K562 (cell line): ENCODE measurements at regions of chr1 and their contacts with region 1.

Region 1: GRCh38 chr1:224406216-224406615 is 28.4 kb downstream of the WDR26 start:
- DNase-seq: no peak
- ATAC-seq: no peak
- H3K4me3 ChIP-seq: no peak overlapping the region
- H3K27ac ChIP-seq: no peak overlapping the region
- H3K4me1 ChIP-seq: no peaks in the 10 kb centered on the region
- H3K27me3 ChIP-seq: no peaks in the 10 kb centered on the region
- CTCF ChIP-seq: no peak
- EP300 ChIP-seq: no peak
- POLR2A ChIP-seq: no peak
- RAD21 ChIP-seq: no peak

Region 2: DNA sequence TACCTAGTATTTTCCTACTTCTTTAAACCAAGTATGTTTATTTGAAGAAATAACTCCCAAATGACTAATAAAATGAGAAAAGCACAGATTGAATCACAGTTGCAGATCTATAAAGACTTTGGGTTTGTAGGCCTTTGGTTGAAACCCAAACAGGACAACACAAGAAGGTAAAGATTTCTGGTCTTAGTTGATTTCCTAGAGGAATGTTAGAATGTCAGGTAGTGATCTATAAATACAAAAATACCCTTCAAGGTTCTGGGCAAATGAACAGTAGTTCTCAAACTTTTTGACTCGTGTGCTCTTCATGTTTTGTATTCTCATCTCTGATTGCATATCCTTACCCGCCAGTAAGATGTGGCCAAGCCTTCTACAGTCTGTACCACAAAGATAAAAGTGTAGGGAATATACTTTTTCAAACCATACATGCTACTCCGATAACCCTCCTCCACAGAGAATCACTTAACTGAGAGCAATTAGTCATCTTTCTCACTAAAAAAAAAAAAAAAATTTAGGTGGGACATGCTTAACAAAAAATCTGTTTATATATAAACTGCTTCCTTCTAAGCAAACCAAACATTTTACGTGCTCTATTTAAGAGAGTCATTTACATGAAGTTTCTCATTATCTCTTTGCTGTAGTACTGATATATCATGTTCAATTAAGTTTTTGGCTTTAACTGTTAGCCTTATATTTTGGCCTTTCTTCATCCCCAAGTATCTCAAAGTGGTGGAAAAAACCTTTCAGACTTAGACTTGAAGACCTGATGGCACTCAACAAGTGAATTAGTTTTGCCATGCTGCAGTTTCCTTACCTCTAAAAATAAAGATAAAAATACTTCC is 13.6 kb before region 1 on chr1:
- CTCF ChIA-PET with region 1: no interaction called
- POLR2A ChIA-PET with region 1: interaction called, 18 read pairs
- in situ Hi-C with region 1: no loop called
- intact Hi-C with region 1: no loop called
- DNase-seq: peak; percentile 63 to 84 (median 76)
- ATAC-seq: peak; percentile 98
- H3K4me3 ChIP-seq: no peak overlapping the region
- H3K27ac ChIP-seq: peak overlapping the region; percentile 40; the same call in 2 of the 3 replicates
- H3K4me1 ChIP-seq: peaks cover 0 to 14% of the 10 kb centered on the region in 2 experiments; a peak in 4 of 5 replicates
- H3K27me3 ChIP-seq: no peaks in the 10 kb centered on the region
- CTCF ChIP-seq: no peak
- EP300 ChIP-seq: peak; percentile 89
- POLR2A ChIP-seq: no peak
- RAD21 ChIP-seq: no peak

Region 3: DNA sequence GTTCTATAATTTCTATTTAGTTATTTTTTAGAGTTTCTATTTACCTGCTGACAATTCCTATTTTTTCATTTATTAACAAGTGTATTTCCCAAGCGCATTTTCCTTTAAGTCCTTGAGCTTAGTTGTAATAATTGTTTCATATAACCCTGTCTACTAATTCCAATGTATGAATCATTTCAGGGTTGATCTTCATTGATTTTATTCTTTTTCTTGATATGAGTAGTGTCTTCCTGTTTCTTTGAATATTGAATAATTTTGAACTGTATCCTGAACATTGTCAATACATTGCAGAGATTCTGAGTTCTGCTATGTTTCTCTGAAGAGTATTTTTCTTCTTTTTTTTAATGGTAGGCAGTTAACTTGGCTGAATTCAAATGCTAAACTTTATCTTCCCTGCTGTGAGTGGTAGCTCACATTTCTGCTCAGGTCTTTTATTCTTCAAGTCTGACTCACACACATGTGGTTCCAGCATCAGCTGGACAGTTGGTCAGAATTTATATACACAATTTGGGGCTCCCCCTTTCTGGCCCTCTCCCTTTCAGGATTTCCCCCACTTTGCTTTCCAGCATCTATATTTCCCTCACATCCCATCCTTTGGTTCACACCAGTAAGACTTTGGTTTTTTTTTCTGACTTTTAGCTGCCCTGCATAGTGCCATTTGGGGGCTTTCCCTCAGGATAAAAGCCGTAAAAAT is 82.7 kb after region 1 on chr1:
- CTCF ChIA-PET with region 1: no interaction called
- POLR2A ChIA-PET with region 1: no interaction called
- in situ Hi-C with region 1: no loop called
- intact Hi-C with region 1: no loop called
- DNase-seq: no peak
- ATAC-seq: no peak
- H3K4me3 ChIP-seq: no peak overlapping the region
- H3K27ac ChIP-seq: no peak overlapping the region
- H3K4me1 ChIP-seq: no peaks in the 10 kb centered on the region; a peak in 1 of 5 replicates
- H3K27me3 ChIP-seq: peaks cover 5 to 12% of the 10 kb centered on the region in 2 experiments; a peak in 2 of 5 replicates
- CTCF ChIP-seq: no peak
- EP300 ChIP-seq: no peak
- POLR2A ChIP-seq: no peak
- RAD21 ChIP-seq: no peak

Region 4: GRCh38 chr1:224707843-224708725 is 301.9 kb after region 1 on chr1:
- CTCF ChIA-PET with region 1: no interaction called
- POLR2A ChIA-PET with region 1: no interaction called
- in situ Hi-C with region 1: no loop called
- intact Hi-C with region 1: no loop called
- DNase-seq: peak in 1 of 4 experiments; percentile 23
- ATAC-seq: no peak
- H3K4me3 ChIP-seq: no peak overlapping the region
- H3K27ac ChIP-seq: no peak overlapping the region
- H3K4me1 ChIP-seq: no peaks in the 10 kb centered on the region
- H3K27me3 ChIP-seq: peaks cover 12 to 35% of the 10 kb centered on the region in 2 experiments
- CTCF ChIP-seq: no peak
- EP300 ChIP-seq: no peak
- POLR2A ChIP-seq: no peak
- RAD21 ChIP-seq: no peak